Caco-2 (cell line): ENCODE measurements at regions of chr13 and their contacts with region 1.

Region 1: GRCh38 chr13:50991579-50992521 is 82.3 kb downstream of the RNASEH2B start:
- DNase-seq: no peak
- H3K4me3 ChIP-seq: no peak overlapping the region
- H3K4me3 Mint-ChIP-seq: no peak overlapping the region
- H3K27ac Mint-ChIP-seq: no peak overlapping the region
- H3K4me1 ChIP-seq: peaks cover 50% of the 10 kb centered on the region
- H3K4me1 Mint-ChIP-seq: no peaks in the 10 kb centered on the region
- H3K27me3 ChIP-seq: no peaks in the 10 kb centered on the region
- H3K27me3 Mint-ChIP-seq: no peaks in the 10 kb centered on the region
- CTCF ChIP-seq: no peak

Region 2: DNA sequence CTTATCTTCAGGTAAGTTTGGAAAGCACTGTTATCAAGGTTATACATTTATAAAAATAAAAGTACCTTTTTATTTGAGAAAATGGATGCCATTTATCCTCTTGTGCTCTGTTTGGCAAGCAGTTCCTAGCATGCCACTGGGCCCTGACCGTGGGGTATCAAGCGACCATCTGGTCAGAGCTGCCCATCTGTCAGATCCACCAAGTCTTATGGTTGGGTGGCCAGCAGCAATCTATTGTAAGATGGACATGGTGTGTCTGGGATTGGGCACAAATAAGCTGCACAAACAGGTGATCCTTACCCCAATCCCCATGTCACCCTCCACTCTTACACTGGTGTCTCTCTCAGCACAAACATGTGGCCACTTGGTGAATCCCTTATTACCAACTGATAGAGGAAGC is 326.9 kb before region 1 on chr13:
- CTCF ChIA-PET with region 1: no interaction called
- POLR2A ChIA-PET with region 1: no interaction called
- intact Hi-C with region 1: no loop called
- DNase-seq: no peak
- H3K4me3 ChIP-seq: no peak overlapping the region
- H3K4me3 Mint-ChIP-seq: no peak overlapping the region
- H3K27ac Mint-ChIP-seq: no peak overlapping the region
- H3K4me1 ChIP-seq: no peaks in the 10 kb centered on the region
- H3K4me1 Mint-ChIP-seq: no peaks in the 10 kb centered on the region
- H3K27me3 ChIP-seq: no peaks in the 10 kb centered on the region
- H3K27me3 Mint-ChIP-seq: no peaks in the 10 kb centered on the region
- CTCF ChIP-seq: no peak

Region 3: DNA sequence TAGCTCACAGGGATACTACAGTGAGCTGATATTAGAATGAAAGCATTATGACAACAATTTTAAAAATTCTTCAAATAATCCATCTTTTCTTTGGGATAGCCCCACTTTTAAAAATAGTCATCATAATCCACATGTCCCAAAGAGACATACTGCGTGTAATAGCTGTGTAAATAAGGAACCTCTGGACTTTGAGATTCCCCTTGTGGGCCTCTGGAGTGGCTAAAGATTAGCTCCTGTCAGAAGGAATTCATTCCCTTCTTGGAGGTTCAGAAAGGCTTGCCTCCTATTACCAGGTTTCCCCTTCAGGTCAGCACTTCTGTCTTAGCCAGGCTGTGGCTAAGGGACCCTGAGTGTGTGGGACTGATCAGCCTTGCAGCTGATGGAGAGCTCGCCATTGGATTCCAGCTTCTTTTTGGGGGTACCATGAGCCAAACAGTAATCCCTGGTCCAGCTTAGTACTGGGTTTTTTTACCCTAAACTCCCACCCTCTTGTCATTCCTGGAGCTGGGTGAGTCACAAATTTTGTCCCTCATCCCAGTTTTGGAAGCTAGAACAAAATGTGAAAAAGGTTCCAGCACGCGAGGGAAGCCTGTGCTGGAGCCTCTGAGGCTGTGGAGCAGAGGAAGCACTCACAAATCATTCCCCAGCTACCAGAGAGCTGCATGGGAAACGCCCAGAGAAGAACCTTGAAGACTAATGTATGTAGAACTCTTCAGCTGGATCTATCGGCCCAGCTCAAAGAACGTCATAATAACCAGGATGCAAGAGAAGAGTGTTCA is 14.4 kb after region 1 on chr13:
- CTCF ChIA-PET with region 1: interaction called, 4 read pairs
- POLR2A ChIA-PET with region 1: interaction called, 8 read pairs
- intact Hi-C with region 1: loop called (anchors 2 kb)
- DNase-seq: peak; percentile 60 to 75
- H3K4me3 ChIP-seq: no peak overlapping the region
- H3K4me3 Mint-ChIP-seq: no peak overlapping the region
- H3K27ac Mint-ChIP-seq: no peak overlapping the region
- H3K4me1 ChIP-seq: peaks cover 29% of the 10 kb centered on the region
- H3K4me1 Mint-ChIP-seq: no peaks in the 10 kb centered on the region
- H3K27me3 ChIP-seq: no peaks in the 10 kb centered on the region; the same call in 1 of the 2 replicates
- H3K27me3 Mint-ChIP-seq: no peaks in the 10 kb centered on the region
- CTCF ChIP-seq: no peak

Region 4: DNA sequence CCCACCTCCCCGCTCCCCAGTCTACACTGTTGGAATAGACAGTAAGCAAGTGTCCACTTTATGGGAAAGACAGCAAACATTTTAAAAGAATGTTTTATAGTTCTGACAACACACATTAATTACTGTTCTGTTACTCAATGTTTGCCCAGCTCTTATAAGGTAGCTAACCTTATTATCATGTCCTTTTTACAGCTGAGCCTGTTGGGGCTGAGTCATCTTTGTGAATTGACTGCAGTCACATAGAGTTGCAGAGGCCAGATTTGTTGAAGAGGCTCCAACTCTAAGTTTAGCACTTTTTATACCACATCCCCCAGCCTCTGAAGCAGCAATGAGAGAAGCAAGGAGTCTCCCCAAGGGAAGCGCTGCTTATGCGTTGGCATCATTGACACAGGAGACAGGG is 43.1 kb after region 1 on chr13:
- CTCF ChIA-PET with region 1: interaction called, 5 read pairs
- POLR2A ChIA-PET with region 1: no interaction called
- intact Hi-C with region 1: loop called (anchors 2 kb)
- DNase-seq: peak in 1 of 2 experiments; percentile 9
- H3K4me3 ChIP-seq: no peak overlapping the region
- H3K4me3 Mint-ChIP-seq: no peak overlapping the region
- H3K27ac Mint-ChIP-seq: no peak overlapping the region
- H3K4me1 ChIP-seq: peaks cover 4% of the 10 kb centered on the region; the same call in 1 of the 2 replicates
- H3K4me1 Mint-ChIP-seq: peaks cover 17% of the 10 kb centered on the region
- H3K27me3 ChIP-seq: no peaks in the 10 kb centered on the region
- H3K27me3 Mint-ChIP-seq: no peaks in the 10 kb centered on the region
- CTCF ChIP-seq: no peak

Region 5: GRCh38 chr13:51044023-51044665 is 52.3 kb after region 1 on chr13:
- CTCF ChIA-PET with region 1: interaction called, 10 read pairs
- POLR2A ChIA-PET with region 1: no interaction called
- intact Hi-C with region 1: loop called (anchors 2 kb)
- DNase-seq: peak in 1 of 2 experiments; percentile 42
- H3K4me3 ChIP-seq: no peak overlapping the region
- H3K4me3 Mint-ChIP-seq: no peak overlapping the region
- H3K27ac Mint-ChIP-seq: no peak overlapping the region
- H3K4me1 ChIP-seq: no peaks in the 10 kb centered on the region
- H3K4me1 Mint-ChIP-seq: no peaks in the 10 kb centered on the region
- H3K27me3 ChIP-seq: no peaks in the 10 kb centered on the region
- H3K27me3 Mint-ChIP-seq: no peaks in the 10 kb centered on the region
- CTCF ChIP-seq: peak in 1 of 2 experiments; percentile 72